Activated T-helper 1 cell treated with anti-CD3 and anti-CD28 coated beads, Interleukin-12 subunit alpha, Interleukin-12 subunit beta, Interleukin-2, Interleukin-4 antibody, amounts not matched to agents 30 ng/mL and 10 ng/mL and 1 ng/mL, durations not matched to agents 14 hours and 24 hours and 36 hours (primary cell): ENCODE measurements at regions of chr7 and their contacts with region 1.

Region 1: GRCh38 chr7:149195180-149196150 is at the start of gene ZNF282:
- DNase-seq: peak; percentile 73
- H3K4me3 Mint-ChIP-seq: peak within 1 kb of the TSS; percentile 90
- H3K27ac Mint-ChIP-seq: peak within 1 kb of the TSS; percentile 90
- H3K4me1 Mint-ChIP-seq: peaks cover 55% of the 10 kb centered on the region
- H3K27me3 Mint-ChIP-seq: peaks cover 3% of the 10 kb centered on the region
- total RNA-seq, gene ZNF282: 49.4 and 55.8 TPM in 2 replicates

Region 2: GRCh38 chr7:148987010-148987750 is 208.3 kb before region 1 on chr7:
- intact Hi-C with region 1: loop called (anchors 5 kb)
- DNase-seq: peak; percentile 78
- H3K4me3 Mint-ChIP-seq: peak overlapping the region; percentile 94
- H3K27ac Mint-ChIP-seq: peak overlapping the region; percentile 92
- H3K4me1 Mint-ChIP-seq: peaks cover 46% of the 10 kb centered on the region
- H3K27me3 Mint-ChIP-seq: peaks cover 21% of the 10 kb centered on the region

Region 3: GRCh38 chr7:149090397-149091195 is 104.9 kb before region 1 on chr7 and contains the start of gene ZNF786:
- intact Hi-C with region 1: loop called (anchors 1 kb)
- DNase-seq: peak; percentile 87
- H3K4me3 Mint-ChIP-seq: peak within 1 kb of the TSS; percentile 99
- H3K27ac Mint-ChIP-seq: peak within 1 kb of the TSS; percentile 100
- H3K4me1 Mint-ChIP-seq: peaks cover 17% of the 10 kb centered on the region
- H3K27me3 Mint-ChIP-seq: peaks cover 2% of the 10 kb centered on the region
- total RNA-seq, gene ZNF786: 9.9 and 10.9 TPM in 2 replicates

Region 4: DNA sequence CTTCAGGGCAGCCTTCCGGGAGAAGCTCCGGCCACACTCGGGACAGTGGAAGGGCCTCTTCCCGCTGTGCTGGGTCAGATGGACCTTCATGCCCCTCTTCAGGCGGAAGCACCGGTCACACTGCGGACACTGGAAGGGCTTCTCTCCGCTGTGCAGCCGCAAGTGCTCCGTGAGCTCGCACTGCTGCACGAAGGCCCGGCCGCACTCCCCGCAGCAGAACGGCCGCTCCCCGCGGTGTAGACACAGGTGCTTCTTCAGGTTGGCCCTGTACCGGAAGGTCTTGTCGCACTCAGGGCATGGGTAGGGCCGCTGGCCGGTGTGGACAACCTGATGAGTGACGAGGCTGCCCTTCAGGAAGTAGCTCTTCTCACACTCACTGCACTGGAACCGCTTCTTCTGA is 90.7 kb before region 1 on chr7:
- intact Hi-C with region 1: no loop called
- DNase-seq: no peak
- H3K4me3 Mint-ChIP-seq: no peak overlapping the region
- H3K27ac Mint-ChIP-seq: no peak overlapping the region
- H3K4me1 Mint-ChIP-seq: no peaks in the 10 kb centered on the region
- H3K27me3 Mint-ChIP-seq: peaks cover 6% of the 10 kb centered on the region

Region 5: GRCh38 chr7:149154030-149154429 is 41.4 kb before region 1 on chr7:
- intact Hi-C with region 1: no loop called
- DNase-seq: no peak
- H3K4me3 Mint-ChIP-seq: no peak overlapping the region
- H3K27ac Mint-ChIP-seq: no peak overlapping the region
- H3K4me1 Mint-ChIP-seq: peaks cover 28% of the 10 kb centered on the region
- H3K27me3 Mint-ChIP-seq: no peaks in the 10 kb centered on the region

Region 6: GRCh38 chr7:149209518-149210269 is 14.2 kb after region 1 on chr7:
- intact Hi-C with region 1: loop called (anchors 2 kb)
- DNase-seq: peak; percentile 65
- H3K4me3 Mint-ChIP-seq: peak overlapping the region; percentile 37
- H3K27ac Mint-ChIP-seq: peak overlapping the region; percentile 87
- H3K4me1 Mint-ChIP-seq: peaks cover 13% of the 10 kb centered on the region
- H3K27me3 Mint-ChIP-seq: no peaks in the 10 kb centered on the region

Region 7: DNA sequence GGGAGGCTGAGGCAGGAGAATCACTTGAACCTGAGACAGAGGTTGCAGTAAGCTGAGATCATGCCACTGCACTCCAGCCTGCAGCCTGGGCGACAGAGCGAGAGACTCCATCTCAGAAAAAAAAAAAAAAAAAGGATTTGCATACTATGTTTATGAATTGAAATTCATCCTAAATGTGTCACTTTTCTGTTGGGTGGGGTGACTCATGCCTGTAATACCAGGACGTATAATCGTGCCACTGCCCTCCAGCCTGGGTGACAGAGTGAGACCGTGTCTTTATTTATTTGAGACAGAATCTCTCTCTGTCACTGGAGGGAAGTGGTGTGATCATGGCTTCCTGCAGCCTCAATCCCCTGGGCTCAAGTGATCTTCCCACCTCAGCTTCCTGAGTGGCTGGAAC is 49.8 kb after region 1 on chr7:
- intact Hi-C with region 1: no loop called
- DNase-seq: no peak
- H3K4me3 Mint-ChIP-seq: no peak overlapping the region
- H3K27ac Mint-ChIP-seq: peak overlapping the region; percentile 80
- H3K4me1 Mint-ChIP-seq: peaks cover 47% of the 10 kb centered on the region
- H3K27me3 Mint-ChIP-seq: no peaks in the 10 kb centered on the region

Region 8: GRCh38 chr7:149284850-149285626 is 89.6 kb after region 1 on chr7:
- intact Hi-C with region 1: loop called (anchors 1 kb)
- DNase-seq: peak; percentile 98
- H3K4me3 Mint-ChIP-seq: peak overlapping the region; percentile 94
- H3K27ac Mint-ChIP-seq: peak overlapping the region; percentile 52
- H3K4me1 Mint-ChIP-seq: peaks cover 33% of the 10 kb centered on the region
- H3K27me3 Mint-ChIP-seq: no peaks in the 10 kb centered on the region

Region 9: GRCh38 chr7:149460493-149461277 is 265.2 kb after region 1 on chr7 and contains the start of gene ZNF777:
- intact Hi-C with region 1: loop called (anchors 2 kb)
- DNase-seq: peak; percentile 80
- H3K4me3 Mint-ChIP-seq: peak within 1 kb of the TSS; percentile 85
- H3K27ac Mint-ChIP-seq: peak within 1 kb of the TSS; percentile 66
- H3K4me1 Mint-ChIP-seq: peaks cover 23% of the 10 kb centered on the region
- H3K27me3 Mint-ChIP-seq: peaks cover 27% of the 10 kb centered on the region
- total RNA-seq, gene ZNF777: 19.0 and 19.3 TPM in 2 replicates